Mammary epithelial cell (primary cell): ENCODE measurements at regions of chr13 and their contacts with region 1.

Region 1: GRCh38 chr13:83125791-83126190 is 756.5 kb downstream of the SLITRK1 start:
- DNase-seq: no peak
- H3K4me3 ChIP-seq: no peak overlapping the region
- H3K27ac ChIP-seq: no peak overlapping the region
- H3K4me1 ChIP-seq: no peaks in the 10 kb centered on the region
- H3K27me3 ChIP-seq: no peaks in the 10 kb centered on the region
- CTCF ChIP-seq: no peak

Region 2: GRCh38 chr13:83024955-83025594 is 100.7 kb before region 1 on chr13:
- CTCF ChIA-PET with region 1: no interaction called
- dilution Hi-C with region 1: no loop called
- in situ Hi-C with region 1: no loop called
- intact Hi-C with region 1: no loop called
- DNase-seq: no peak
- H3K4me3 ChIP-seq: no peak overlapping the region
- H3K27ac ChIP-seq: no peak overlapping the region
- H3K4me1 ChIP-seq: no peaks in the 10 kb centered on the region
- H3K27me3 ChIP-seq: no peaks in the 10 kb centered on the region
- CTCF ChIP-seq: no peak

Region 3: DNA sequence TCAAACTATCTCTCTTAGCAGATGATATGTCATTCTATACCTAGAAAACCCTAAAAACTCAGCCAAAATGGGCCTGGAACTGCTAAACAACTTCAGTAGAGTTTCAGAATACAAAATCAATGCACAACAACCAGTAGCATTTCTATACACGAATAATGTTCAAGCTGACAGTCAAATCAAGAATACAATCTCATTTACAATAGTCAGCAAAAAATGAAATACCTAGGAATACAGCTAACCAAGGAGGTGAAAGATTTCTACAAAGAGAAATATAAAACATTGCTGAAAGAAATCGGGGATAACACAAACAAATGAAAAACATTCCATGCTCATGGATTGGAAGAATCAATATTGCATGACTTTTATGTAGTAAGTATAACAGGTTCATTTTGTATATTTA is 48.3 kb before region 1 on chr13:
- CTCF ChIA-PET with region 1: no interaction called
- dilution Hi-C with region 1: no loop called
- in situ Hi-C with region 1: no loop called
- intact Hi-C with region 1: loop called (anchors 2 kb)
- DNase-seq: no peak
- H3K4me3 ChIP-seq: no peak overlapping the region
- H3K27ac ChIP-seq: no peak overlapping the region
- H3K4me1 ChIP-seq: no peaks in the 10 kb centered on the region
- H3K27me3 ChIP-seq: no peaks in the 10 kb centered on the region
- CTCF ChIP-seq: no peak

Region 4: GRCh38 chr13:83286737-83287136 is 160.9 kb after region 1 on chr13:
- CTCF ChIA-PET with region 1: no interaction called
- dilution Hi-C with region 1: no loop called
- in situ Hi-C with region 1: no loop called
- intact Hi-C with region 1: no loop called
- DNase-seq: peak; percentile 51
- H3K4me3 ChIP-seq: no peak overlapping the region
- H3K27ac ChIP-seq: no peak overlapping the region
- H3K4me1 ChIP-seq: no peaks in the 10 kb centered on the region
- H3K27me3 ChIP-seq: no peaks in the 10 kb centered on the region
- CTCF ChIP-seq: no peak